Activated naive CD4-positive, alpha-beta T cell treated with anti-CD3 and anti-CD28 coated beads for 36 hours (primary cell): ENCODE measurements at regions of chr2 and their contacts with region 1.

Region 1: GRCh38 chr2:216206041-216206703 is 97.0 kb downstream of the XRCC5 start:
- DNase-seq: no peak
- H3K4me3 Mint-ChIP-seq: no peak overlapping the region
- H3K27ac Mint-ChIP-seq: peak overlapping the region; percentile 93
- H3K4me1 Mint-ChIP-seq: peaks cover 77% of the 10 kb centered on the region
- H3K27me3 Mint-ChIP-seq: no peaks in the 10 kb centered on the region

Region 2: DNA sequence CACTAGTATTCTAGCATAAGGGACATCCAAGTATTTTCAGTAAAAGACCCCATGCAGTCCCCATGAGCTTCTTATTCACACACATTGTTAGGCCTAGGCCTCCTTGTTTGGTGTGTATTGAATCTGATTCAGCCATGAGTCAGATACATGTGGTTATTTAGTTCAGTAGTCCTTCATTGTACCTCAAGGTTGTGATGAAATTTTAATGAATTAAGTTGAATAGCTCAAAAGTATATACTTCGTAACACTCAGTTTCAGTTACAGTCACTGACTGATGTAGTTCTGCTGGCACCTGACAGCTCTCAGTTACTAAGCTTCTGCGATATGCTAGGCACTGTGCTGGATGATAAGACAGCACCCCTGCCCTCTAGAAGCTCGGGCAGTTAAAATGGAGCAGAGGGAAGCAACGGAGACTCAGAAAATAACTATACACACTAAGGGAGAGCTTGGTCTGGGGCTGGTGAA is 10.6 kb before region 1 on chr2:
- CTCF ChIA-PET with region 1: interaction called, 7 read pairs
- intact Hi-C with region 1: loop called (anchors 1 kb)
- DNase-seq: peak; percentile 61
- H3K4me3 Mint-ChIP-seq: no peak overlapping the region
- H3K27ac Mint-ChIP-seq: peak overlapping the region; percentile 80
- H3K4me1 Mint-ChIP-seq: peaks cover 54% of the 10 kb centered on the region
- H3K27me3 Mint-ChIP-seq: no peaks in the 10 kb centered on the region

Region 3: GRCh38 chr2:216222650-216223352 is 16.6 kb after region 1 on chr2:
- CTCF ChIA-PET with region 1: no interaction called
- intact Hi-C with region 1: loop called (anchors 1 kb)
- DNase-seq: peak; percentile 56
- H3K4me3 Mint-ChIP-seq: no peak overlapping the region
- H3K27ac Mint-ChIP-seq: peak overlapping the region; percentile 41
- H3K4me1 Mint-ChIP-seq: peaks cover 28% of the 10 kb centered on the region
- H3K27me3 Mint-ChIP-seq: no peaks in the 10 kb centered on the region

Region 4: GRCh38 chr2:216287251-216287650 is 81.1 kb after region 1 on chr2:
- CTCF ChIA-PET with region 1: no interaction called
- intact Hi-C with region 1: no loop called
- DNase-seq: no peak
- H3K4me3 Mint-ChIP-seq: no peak overlapping the region
- H3K27ac Mint-ChIP-seq: no peak overlapping the region
- H3K4me1 Mint-ChIP-seq: peaks cover 2% of the 10 kb centered on the region
- H3K27me3 Mint-ChIP-seq: no peaks in the 10 kb centered on the region

Region 5: DNA sequence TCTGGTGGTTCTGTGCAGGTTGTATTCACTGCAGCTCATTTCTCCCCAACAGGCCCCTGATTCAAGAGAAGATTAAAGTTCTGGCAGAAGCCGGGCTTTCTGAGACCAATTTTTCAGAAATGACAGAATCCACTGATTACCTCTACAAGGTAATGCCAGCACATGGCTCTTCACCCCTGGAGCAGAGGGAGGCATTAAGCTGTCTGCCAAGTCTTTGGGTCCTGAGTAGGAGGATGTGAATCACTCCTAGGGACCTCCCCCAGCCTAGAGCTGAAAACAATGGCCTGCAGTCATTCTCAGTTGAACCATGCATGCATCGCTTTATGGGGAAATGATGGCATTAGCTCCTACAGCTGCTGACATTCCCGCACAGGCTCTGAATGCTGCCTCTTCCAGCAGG is 272.0 kb after region 1 on chr2:
- CTCF ChIA-PET with region 1: no interaction called
- intact Hi-C with region 1: loop called (anchors 5 kb)
- DNase-seq: peak; percentile 68
- H3K4me3 Mint-ChIP-seq: no peak overlapping the region
- H3K27ac Mint-ChIP-seq: no peak overlapping the region
- H3K4me1 Mint-ChIP-seq: peaks cover 23% of the 10 kb centered on the region
- H3K27me3 Mint-ChIP-seq: no peaks in the 10 kb centered on the region

Region 6: GRCh38 chr2:217090024-217090473 is 883.9 kb after region 1 on chr2:
- CTCF ChIA-PET with region 1: no interaction called
- intact Hi-C with region 1: loop called (anchors 1 kb)
- DNase-seq: peak; percentile 46
- H3K4me3 Mint-ChIP-seq: no peak overlapping the region
- H3K27ac Mint-ChIP-seq: no peak overlapping the region
- H3K4me1 Mint-ChIP-seq: peaks cover 25% of the 10 kb centered on the region
- H3K27me3 Mint-ChIP-seq: peaks cover 16% of the 10 kb centered on the region